MCF 10A (cell line): ENCODE measurements at regions of chr7 and their contacts with region 1.

Region 1: DNA sequence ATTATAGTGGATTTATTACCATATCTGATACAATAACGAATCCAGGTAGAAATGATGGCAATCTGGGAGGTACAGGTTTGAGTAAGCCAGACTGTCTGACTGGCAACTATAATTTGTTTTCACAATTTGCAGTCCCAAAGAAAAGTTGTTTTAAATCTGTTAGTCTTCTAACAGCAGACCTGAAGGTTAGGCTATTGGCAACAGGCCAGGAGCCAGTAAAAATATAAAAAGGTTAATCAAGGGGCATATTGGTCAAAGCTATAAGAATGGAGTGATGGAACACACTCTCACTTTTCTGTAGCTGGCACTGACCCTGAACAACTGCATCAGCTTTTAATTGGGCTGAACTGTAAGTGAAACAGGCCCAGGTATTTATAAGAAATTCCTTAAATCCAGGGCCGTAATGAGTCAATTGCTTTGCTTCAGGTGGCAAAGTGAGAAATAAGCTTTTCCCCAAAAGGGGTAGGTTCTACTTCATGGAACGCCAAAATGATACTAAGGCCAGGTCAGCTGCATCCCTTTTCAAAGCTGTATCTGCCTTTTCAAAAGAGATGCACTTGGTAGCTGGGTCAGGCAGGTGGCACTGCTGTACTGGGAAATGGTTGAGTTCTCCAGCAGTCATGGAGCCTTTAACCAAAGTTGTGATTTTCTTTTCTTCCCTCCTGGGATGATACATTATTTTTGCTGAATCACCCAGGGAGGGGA is 7.0 kb upstream of the GPR22 start:
- DNase-seq: peak; percentile 78
- H3K4me3 Mint-ChIP-seq: no peak overlapping the region
- H3K27ac Mint-ChIP-seq: no peak overlapping the region
- H3K4me1 Mint-ChIP-seq: peaks cover 5% of the 10 kb centered on the region
- H3K27me3 Mint-ChIP-seq: no peaks in the 10 kb centered on the region
- CTCF ChIP-seq: peak; percentile 82

Region 2: DNA sequence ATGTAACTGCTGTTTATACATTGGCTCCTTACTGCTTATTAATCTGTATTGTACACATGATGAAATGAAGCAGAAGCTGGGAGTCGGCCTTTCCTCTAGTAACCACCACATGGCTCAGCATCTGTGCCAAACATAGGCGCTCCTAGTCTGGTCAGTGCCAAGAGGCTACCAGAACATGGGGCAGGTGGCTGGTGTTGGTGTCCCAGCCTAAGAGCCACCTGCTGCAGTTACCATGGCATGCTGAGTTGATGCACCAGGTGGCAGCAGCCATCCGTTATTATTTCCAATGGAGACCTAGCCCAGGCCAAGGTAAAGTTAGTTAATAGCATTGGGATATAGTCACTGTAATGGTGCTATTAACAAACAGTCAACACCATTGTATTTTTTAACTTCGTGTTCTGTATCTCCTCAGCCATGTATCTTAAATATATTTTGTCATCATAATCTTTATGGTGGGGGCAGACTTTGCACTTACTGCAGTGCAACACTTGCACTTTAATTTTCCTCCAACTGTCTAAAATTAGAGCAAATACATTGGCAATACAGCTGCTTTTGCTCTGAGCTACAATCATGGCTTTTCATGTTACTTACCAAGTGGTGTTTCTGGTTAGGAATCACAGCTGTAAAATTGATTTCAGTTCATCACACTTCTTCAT is 261.0 kb before region 1 on chr7:
- CTCF ChIA-PET with region 1: interaction called, 3 read pairs
- POLR2A ChIA-PET with region 1: no interaction called
- intact Hi-C with region 1: loop called (anchors 10 kb)
- DNase-seq: peak; percentile 50
- H3K4me3 Mint-ChIP-seq: no peak overlapping the region
- H3K27ac Mint-ChIP-seq: no peak overlapping the region
- H3K4me1 Mint-ChIP-seq: no peaks in the 10 kb centered on the region
- H3K27me3 Mint-ChIP-seq: no peaks in the 10 kb centered on the region
- CTCF ChIP-seq: peak; percentile 55

Region 3: DNA sequence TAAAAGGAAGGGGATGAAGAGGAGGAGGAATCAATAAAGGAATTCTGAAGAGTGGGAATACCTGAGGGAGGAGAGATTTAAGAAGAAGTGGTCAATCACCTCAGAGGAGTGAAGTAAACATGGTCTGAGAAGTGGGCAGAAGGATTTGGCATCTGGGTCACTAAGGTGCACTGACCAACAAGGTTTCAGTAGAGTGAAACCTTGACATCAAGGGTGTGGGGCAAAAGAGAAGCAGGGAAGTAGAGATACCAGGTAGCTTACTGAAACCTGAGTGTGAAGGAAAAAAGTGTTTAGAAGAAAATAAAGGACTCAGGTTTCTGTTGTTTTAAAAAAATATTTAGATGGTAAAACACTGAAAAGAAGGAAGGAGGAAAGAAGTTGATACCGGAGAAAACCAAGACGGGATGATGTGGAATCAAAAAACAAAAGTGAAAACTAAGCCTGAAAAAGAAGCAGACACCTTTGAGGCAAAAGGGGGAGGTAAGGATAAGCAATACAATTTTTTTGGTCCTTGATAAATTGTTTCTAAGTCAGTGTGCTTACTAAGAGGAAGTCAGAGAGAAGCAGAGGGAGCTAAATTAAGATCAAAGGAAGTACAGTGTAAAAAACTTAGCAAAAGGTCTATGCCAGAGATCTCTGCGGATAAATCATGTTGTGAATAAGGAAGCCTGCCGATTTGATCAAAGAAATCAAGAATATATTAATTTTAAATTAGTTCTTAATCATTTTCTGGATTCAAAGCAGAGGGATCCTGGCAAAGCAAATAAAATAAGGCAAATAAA is 130.2 kb before region 1 on chr7:
- CTCF ChIA-PET with region 1: no interaction called
- POLR2A ChIA-PET with region 1: no interaction called
- intact Hi-C with region 1: no loop called
- DNase-seq: no peak
- H3K4me3 Mint-ChIP-seq: no peak overlapping the region
- H3K27ac Mint-ChIP-seq: no peak overlapping the region
- H3K4me1 Mint-ChIP-seq: peaks cover 9% of the 10 kb centered on the region
- H3K27me3 Mint-ChIP-seq: no peaks in the 10 kb centered on the region
- CTCF ChIP-seq: no peak

Region 4: GRCh38 chr7:107501593-107501992 is 38.7 kb after region 1 on chr7:
- CTCF ChIA-PET with region 1: interaction called, 4 read pairs
- POLR2A ChIA-PET with region 1: interaction called, 3 read pairs
- intact Hi-C with region 1: loop called (anchors 1 kb)
- DNase-seq: peak; percentile 43
- H3K4me3 Mint-ChIP-seq: no peak overlapping the region
- H3K27ac Mint-ChIP-seq: no peak overlapping the region
- H3K4me1 Mint-ChIP-seq: peaks cover 10% of the 10 kb centered on the region
- H3K27me3 Mint-ChIP-seq: no peaks in the 10 kb centered on the region
- CTCF ChIP-seq: peak; percentile 43

Region 5: DNA sequence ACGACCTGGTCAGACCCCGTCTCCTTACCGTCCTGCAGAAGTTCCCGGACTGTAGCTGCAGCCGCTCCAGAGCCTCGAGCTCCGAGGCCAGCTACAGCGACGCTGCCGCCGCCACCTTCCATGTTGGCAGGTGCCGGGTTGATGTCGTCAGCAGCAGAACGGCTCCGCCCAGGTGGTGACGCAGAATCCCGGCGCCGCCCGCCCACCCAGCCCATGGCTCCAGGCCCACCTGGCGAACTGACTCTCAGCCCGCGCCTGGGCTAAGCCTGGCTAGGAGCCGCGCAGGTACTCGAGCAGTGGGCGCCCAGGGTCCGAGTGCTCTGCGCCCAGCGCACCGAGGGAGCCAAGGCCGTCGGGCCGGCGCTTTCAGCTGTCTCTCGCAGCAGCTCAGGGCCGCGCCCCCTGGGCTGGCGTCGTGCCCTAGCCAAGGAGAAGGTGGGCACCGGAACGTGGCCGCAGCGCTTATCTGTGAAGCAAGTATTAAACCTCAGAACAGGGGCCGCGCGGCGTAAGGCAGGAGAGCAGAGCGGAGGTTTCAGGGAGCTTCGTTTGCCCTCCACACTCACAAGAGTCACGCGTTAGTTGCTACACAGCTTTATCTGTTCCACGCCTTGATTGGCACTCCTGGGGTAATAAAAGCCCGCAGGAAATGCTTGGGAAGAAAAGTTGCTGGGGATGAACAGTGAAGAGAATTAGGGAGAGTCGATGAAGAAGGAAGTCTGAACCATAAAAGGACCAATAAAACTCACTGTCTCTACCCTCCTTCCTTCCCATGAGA is 101.1 kb after region 1 on chr7 and contains the starts of genes COG5 and DUS4L:
- CTCF ChIA-PET with region 1: interaction called, 6 read pairs
- POLR2A ChIA-PET with region 1: interaction called, 8 read pairs
- intact Hi-C with region 1: loop called (anchors 5 kb)
- DNase-seq: peak; percentile 80
- H3K4me3 Mint-ChIP-seq: peak within 1 kb of the TSS; percentile 75
- H3K27ac Mint-ChIP-seq: peak within 1 kb of the TSS; percentile 79
- H3K4me1 Mint-ChIP-seq: peaks cover 42% of the 10 kb centered on the region
- H3K27me3 Mint-ChIP-seq: no peaks in the 10 kb centered on the region
- CTCF ChIP-seq: no peak
- total RNA-seq, gene COG5: 40.3 and 40.9 TPM in 2 replicates
- total RNA-seq, gene DUS4L: 14.5 and 16.3 TPM in 2 replicates

Region 6: DNA sequence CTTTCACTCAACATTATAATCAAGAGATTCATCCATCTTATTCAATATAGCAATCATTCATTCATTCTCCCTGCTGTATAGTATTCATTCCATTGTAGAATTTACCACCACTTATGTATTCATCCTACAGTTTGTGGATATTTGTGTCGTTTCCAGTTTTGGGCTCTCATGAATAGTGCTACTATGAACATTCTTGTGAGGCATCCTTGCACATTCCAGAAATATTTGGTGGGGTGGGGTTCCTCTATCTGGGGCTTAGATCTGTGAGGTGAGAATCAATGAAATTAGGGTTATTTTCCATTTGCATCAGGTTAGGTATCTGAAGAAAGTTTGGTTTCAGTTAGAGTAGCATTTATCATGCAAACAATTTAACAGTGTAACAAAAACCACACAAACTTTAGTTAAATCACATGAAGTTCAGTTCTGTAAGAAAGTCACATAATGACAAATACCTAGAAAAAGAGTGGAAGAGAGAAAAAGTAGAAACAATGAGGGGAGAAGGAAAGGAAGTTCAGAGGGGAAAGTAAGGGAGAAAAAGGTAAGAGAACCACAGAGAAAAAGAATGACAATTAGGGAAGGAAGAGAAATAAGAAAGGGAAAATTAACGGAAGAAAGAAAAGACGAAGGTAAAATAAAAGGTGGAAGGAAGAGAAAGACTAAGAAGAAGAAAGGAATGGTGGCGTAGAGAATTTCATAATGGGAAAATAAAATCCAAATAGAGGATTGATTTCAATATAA is 255.7 kb after region 1 on chr7:
- CTCF ChIA-PET with region 1: interaction called, 95 read pairs
- POLR2A ChIA-PET with region 1: no interaction called
- intact Hi-C with region 1: no loop called
- DNase-seq: no peak
- H3K4me3 Mint-ChIP-seq: no peak overlapping the region
- H3K27ac Mint-ChIP-seq: no peak overlapping the region
- H3K4me1 Mint-ChIP-seq: peaks cover 7% of the 10 kb centered on the region
- H3K27me3 Mint-ChIP-seq: no peaks in the 10 kb centered on the region
- CTCF ChIP-seq: no peak